ENCODE measurements at regions of chr6 and their contacts with region 1.

Region 1: DNA sequence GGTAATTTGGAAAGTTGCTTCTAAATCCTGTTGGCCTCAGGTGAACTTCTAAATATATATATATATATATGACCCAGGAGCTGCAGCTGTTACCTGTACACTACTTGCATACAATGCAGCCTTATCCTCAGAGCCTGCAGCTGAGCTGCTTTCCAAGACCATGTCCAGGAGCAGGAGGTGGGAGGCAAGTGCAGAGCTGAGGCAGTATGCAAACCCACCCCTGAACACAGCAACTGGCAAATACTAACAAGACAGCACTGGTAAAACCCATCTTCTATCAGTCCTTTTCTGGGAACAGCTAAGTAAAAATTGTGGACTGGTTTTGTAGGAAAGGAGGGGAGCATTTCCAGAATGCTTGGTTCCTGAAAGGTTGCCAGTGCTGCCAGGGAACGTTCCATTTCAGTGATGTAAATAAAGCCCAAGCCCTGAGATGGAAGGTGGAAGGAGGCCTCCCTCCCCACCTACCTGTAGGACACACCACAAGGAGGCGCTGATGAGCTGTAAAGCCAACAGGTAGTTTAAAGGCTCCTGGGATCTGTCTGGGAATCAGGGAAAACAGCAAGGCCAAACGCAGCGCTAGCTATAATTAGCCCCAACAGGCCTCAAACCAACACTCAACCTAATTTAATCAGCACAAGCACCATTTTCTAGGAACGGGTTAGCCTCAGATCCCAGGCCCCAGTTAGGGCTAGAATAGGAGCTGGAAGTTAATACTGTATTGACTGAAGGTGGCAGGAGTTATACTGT is 93.8 kb upstream of the MAP7 start:
- DNase-seq: peak; percentile 90
- ATAC-seq: peak; percentile 57
- H3K4me3 Mint-ChIP-seq: no peak overlapping the region
- H3K27ac Mint-ChIP-seq: no peak overlapping the region
- H3K4me1 Mint-ChIP-seq: no peaks in the 10 kb centered on the region
- H3K27me3 Mint-ChIP-seq: no peaks in the 10 kb centered on the region

Region 2: DNA sequence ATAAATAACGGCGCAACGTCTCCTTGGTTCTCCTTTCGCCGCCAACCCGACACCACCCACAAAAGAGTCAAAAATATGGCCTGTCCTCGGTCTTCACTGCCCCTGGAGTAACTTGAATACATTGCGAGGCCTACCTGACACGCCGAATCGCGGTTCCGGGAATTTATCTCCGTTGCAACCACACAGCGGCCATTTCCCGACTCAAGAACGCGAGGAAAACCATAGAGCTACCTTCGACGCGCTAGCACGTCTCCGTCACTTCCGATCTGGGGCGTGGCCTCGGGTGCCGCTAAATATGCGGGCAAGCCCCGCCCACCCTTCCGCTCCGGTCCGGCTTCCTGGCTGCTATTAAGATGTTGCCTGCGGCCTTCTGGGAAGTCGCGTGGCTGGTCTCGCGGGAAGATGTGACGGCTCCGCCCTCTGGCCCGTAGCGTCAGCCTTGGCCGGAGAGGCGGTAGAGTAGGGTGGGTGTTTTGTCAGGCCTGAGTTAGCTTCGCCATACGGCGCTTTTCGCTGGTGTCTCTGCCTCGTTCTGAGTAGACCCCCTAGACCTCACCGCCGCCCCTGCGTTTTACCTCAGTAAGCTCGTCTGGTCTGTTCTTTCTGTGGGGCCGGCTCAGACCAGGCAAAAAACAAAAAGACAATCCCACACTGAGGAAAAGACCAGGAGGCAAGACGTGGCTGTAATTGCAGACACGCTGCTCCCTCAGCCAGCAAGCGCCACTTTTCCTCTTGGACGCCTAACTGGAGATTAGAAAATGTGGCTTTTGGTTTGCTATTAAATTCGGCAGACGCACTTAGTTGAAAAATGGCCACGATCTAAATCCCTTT is 354.2 kb before region 1 on chr6 and contains the start of gene BCLAF1:
- CTCF ChIA-PET with region 1: no interaction called
- POLR2A ChIA-PET with region 1: no interaction called
- intact Hi-C with region 1: loop called in 1 of 2 experiments (anchors 1 kb)
- DNase-seq: peak; percentile 100
- ATAC-seq: peak; percentile 83
- H3K4me3 Mint-ChIP-seq: peak within 1 kb of the TSS; percentile 100
- H3K27ac Mint-ChIP-seq: peak within 1 kb of the TSS; percentile 100
- H3K4me1 Mint-ChIP-seq: peaks cover 37% of the 10 kb centered on the region
- H3K27me3 Mint-ChIP-seq: no peaks in the 10 kb centered on the region
- total RNA-seq, gene BCLAF1: 166 to 223 TPM

Region 3: GRCh38 chr6:136633355-136633754 is 10.7 kb before region 1 on chr6:
- CTCF ChIA-PET with region 1: interaction called, 11 read pairs
- POLR2A ChIA-PET with region 1: no interaction called
- intact Hi-C with region 1: no loop called
- DNase-seq: no peak
- ATAC-seq: no peak
- H3K4me3 Mint-ChIP-seq: no peak overlapping the region
- H3K27ac Mint-ChIP-seq: no peak overlapping the region
- H3K4me1 Mint-ChIP-seq: peaks cover 2% of the 10 kb centered on the region
- H3K27me3 Mint-ChIP-seq: no peaks in the 10 kb centered on the region

Region 4: DNA sequence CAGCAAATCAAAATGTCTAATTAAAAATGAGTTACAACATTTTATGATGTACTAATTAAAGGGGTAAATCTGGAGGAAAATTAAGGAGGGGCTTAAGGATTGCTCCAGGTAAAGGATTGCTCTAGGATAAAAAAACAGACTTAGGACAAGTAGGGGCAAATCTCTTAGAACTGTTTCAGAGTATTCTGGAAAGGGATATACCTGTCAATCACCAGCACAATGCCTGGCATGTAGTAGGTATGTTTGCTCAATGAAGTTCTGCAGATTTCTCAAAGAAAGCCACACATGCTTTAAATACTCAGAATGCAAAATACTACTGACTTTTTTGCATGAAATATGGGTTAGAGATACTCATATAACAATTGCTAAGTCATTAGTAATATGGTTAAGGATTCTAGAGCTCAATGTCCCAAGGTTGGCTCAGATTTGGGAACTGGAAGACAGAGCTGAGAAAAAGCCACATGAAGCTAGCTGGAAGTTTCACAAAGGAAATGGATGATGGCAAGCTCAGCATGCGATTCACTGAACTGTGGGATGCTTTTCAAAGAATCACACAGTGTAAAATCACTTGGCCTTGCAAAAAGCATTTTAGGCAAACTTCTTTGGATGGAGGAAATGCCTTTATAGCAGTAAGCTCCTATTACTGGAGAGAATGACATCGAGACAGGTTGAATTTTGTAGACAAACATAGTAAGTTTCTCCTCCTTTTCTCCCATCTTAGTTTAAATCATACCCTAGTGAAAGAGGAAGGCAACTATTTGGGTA is 75.4 kb after region 1 on chr6:
- CTCF ChIA-PET with region 1: interaction called, 14 read pairs
- POLR2A ChIA-PET with region 1: interaction called, 3 read pairs
- intact Hi-C with region 1: no loop called
- DNase-seq: no peak
- ATAC-seq: peak; percentile 66
- H3K4me3 Mint-ChIP-seq: no peak overlapping the region
- H3K27ac Mint-ChIP-seq: peak overlapping the region; percentile 9
- H3K4me1 Mint-ChIP-seq: peaks cover 37% of the 10 kb centered on the region
- H3K27me3 Mint-ChIP-seq: no peaks in the 10 kb centered on the region

Region 5: DNA sequence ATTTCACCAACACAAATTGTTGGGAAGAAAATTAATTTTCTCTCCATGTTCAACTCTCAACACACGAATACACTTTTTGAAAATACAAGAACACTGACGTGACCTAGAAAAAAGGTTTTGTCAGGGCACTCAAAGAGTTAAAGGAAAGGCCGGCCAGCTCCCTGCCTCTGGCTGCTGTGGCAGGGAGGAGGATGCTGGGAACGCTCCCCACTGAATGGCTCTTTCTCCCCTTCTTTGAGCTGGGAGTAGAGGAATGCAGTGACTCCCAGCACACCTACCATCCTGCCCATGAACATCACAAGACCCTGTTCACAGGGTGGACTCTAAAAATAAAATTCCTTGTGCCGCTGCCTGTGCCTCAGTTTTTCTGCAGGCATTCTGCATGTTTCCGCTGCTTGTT is 101.3 kb after region 1 on chr6:
- CTCF ChIA-PET with region 1: interaction called, 11 read pairs
- POLR2A ChIA-PET with region 1: no interaction called
- intact Hi-C with region 1: loop called in 1 of 2 experiments (anchors 5 kb)
- DNase-seq: no peak
- ATAC-seq: no peak
- H3K4me3 Mint-ChIP-seq: no peak overlapping the region
- H3K27ac Mint-ChIP-seq: no peak overlapping the region
- H3K4me1 Mint-ChIP-seq: peaks cover 22% of the 10 kb centered on the region
- H3K27me3 Mint-ChIP-seq: no peaks in the 10 kb centered on the region

Region 6: DNA sequence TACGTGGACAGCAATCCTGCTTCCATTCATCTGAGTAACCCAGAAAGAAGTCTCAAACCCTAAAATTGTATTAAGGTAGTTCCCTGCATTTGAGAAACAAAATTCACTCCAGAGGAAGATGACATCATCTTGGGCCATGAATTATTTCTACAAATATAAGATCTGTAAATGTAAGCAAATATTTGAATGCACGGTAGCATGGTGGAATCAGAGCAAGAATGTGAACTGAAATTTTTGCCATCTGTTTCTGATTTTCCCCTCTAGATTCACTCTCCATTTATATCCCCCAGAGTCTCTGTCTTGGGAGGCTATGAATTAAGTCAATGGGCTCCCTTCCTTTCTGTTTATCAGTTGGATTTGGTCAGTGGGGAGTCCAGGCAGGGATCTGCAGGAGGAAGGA is 154.0 kb after region 1 on chr6:
- CTCF ChIA-PET with region 1: interaction called, 263 read pairs
- POLR2A ChIA-PET with region 1: interaction called, 13 read pairs
- intact Hi-C with region 1: loop called (anchors 1 kb)
- DNase-seq: no peak
- ATAC-seq: no peak
- H3K4me3 Mint-ChIP-seq: no peak overlapping the region
- H3K27ac Mint-ChIP-seq: no peak overlapping the region
- H3K4me1 Mint-ChIP-seq: peaks cover 6% of the 10 kb centered on the region
- H3K27me3 Mint-ChIP-seq: peaks cover 2% of the 10 kb centered on the region

Region 7: DNA sequence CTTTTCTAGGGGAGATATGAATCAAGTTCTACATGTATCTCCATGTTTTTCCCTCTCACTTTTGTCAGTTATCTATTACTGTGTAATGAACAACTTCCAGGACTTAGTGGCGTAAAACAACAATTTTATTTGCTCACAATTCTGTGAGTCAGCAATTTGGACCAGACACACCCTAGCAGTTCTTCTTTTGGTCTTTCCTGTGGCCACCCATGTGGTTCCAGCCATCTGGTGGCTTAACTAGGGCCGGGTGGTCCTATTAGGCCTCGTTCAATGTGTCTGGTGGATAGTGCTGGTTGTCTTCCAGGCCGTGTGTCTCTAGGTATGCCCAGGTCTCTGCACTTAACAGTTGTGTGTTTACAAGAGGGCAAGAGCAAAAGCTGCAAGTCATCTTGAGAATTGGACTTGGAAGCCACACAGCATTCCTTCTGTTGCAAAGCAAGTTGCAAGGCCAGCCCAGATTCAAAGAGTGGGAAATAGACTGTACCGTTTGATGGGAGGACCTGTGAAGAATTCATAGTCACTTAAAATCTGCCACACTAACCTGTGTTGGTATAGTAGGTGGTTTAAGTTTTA is 257.3 kb after region 1 on chr6:
- CTCF ChIA-PET with region 1: no interaction called
- POLR2A ChIA-PET with region 1: no interaction called
- intact Hi-C with region 1: no loop called
- DNase-seq: no peak
- ATAC-seq: no peak
- H3K4me3 Mint-ChIP-seq: no peak overlapping the region
- H3K27ac Mint-ChIP-seq: no peak overlapping the region
- H3K4me1 Mint-ChIP-seq: no peaks in the 10 kb centered on the region
- H3K27me3 Mint-ChIP-seq: no peaks in the 10 kb centered on the region

Region 8: GRCh38 chr6:136927292-136927691 is 283.3 kb after region 1 on chr6:
- CTCF ChIA-PET with region 1: interaction called, 5 read pairs
- POLR2A ChIA-PET with region 1: no interaction called
- intact Hi-C with region 1: loop called (anchors 2 to 5 kb)
- DNase-seq: peak; percentile 50
- ATAC-seq: peak; percentile 63
- H3K4me3 Mint-ChIP-seq: no peak overlapping the region
- H3K27ac Mint-ChIP-seq: no peak overlapping the region
- H3K4me1 Mint-ChIP-seq: peaks cover 9% of the 10 kb centered on the region
- H3K27me3 Mint-ChIP-seq: peaks cover 33% of the 10 kb centered on the region